ENCODE measurements at regions of chr16 and their contacts with region 1.

Region 1: DNA sequence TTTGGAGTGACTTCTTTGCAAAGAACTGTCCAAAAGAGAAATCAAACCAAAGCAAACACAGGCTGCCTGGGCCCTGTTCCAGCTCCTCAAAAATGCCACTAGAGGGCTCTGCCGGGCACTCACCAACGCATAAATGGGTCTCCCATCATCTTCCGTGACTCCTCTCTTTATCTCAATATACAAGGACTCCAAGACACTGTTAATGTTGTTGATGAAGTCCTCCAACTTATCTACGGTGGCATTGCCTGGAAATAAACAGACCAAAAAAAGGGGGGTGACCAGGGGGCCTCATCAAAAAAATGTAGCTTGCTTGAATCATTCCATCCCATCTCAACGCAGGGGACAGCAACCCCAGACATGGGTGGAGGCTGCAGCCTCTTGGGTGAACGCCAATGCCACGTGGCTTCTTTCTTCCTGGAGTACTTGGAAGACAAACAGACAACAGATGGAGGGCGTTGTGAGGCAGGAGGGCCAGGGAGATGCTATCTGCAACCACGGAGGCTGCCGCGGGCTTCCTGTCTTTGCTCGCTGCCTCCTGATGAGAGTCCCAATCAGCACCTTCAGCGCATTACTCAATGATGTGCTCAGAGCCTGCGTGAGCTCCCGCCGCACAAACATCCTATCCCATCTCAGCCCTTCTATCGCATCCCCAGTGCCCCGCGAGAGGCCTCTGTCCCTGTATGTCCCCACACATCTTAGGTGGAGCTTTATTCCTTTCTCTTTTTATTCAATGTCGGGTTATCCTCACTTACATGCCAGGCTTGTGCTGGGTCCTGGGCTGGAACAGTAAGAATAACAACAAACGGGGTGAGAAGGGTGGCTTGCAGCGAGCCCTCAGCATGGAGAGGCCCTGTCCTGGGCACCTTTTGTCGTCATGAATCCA is 32.0 kb downstream of the KDM8 start:
- DNase-seq: peak; percentile 97
- ATAC-seq: peak; percentile 63
- H3K4me3 Mint-ChIP-seq: peak overlapping the region; percentile 77
- H3K27ac Mint-ChIP-seq: peak overlapping the region; percentile 99
- H3K4me1 Mint-ChIP-seq: peaks cover 99% of the 10 kb centered on the region
- H3K27me3 Mint-ChIP-seq: no peaks in the 10 kb centered on the region

Region 2: GRCh38 chr16:26981266-26981938 is 253.9 kb before region 1 on chr16:
- CTCF ChIA-PET with region 1: no interaction called
- POLR2A ChIA-PET with region 1: no interaction called
- DNase-seq: no peak
- ATAC-seq: no peak
- H3K4me3 Mint-ChIP-seq: no peak overlapping the region
- H3K27ac Mint-ChIP-seq: no peak overlapping the region
- H3K4me1 Mint-ChIP-seq: no peaks in the 10 kb centered on the region
- H3K27me3 Mint-ChIP-seq: peaks cover 4% of the 10 kb centered on the region

Region 3: DNA sequence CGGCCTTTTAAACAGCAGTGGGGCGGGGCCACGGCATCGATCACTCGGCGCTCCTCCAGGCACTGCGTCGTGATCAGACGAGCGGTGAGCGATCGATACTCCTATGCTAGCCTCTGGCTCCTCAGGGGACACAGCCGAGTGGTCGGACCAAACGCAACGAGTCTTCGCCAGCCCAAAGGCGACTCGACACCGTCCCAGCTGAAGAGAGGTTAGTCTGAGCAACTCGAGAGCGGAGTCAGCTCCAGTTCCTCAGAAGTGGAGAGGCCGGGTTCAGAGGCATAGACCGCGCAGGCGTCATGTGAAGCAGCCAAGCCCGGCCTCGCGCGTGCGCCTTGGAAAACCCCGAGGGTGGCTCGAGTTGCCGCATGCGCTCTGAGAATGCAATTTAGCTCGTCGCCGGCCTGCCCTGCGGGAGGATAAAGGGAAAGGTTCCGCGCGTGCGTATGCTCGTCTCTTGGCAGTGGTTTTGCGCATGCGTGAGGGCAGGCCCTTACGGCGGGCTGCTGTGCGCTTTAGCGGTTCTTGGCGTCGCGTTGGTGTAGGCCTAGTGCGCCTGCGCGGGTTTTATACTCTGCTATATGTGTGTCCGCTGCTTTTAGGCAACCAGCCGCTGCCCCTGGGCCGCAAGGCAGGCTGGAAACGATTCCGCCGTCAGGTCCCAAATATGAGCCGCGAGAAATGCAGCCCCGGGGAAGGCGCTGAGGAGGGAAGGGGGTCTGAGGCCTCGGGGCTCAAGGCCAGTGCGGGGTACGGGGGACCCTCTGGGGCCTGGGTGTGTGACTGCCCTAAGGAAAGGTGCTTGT is 31.7 kb before region 1 on chr16 and contains the start of gene KDM8:
- CTCF ChIA-PET with region 1: interaction called, 43 read pairs
- POLR2A ChIA-PET with region 1: interaction called, 12 read pairs
- DNase-seq: peak; percentile 100
- ATAC-seq: peak; percentile 95
- H3K4me3 Mint-ChIP-seq: peak within 1 kb of the TSS; percentile 98
- H3K27ac Mint-ChIP-seq: peak within 1 kb of the TSS; percentile 99
- H3K4me1 Mint-ChIP-seq: peaks cover 59% of the 10 kb centered on the region
- H3K27me3 Mint-ChIP-seq: no peaks in the 10 kb centered on the region
- total RNA-seq, gene KDM8: 14.7 to 15.0 TPM

Region 4: DNA sequence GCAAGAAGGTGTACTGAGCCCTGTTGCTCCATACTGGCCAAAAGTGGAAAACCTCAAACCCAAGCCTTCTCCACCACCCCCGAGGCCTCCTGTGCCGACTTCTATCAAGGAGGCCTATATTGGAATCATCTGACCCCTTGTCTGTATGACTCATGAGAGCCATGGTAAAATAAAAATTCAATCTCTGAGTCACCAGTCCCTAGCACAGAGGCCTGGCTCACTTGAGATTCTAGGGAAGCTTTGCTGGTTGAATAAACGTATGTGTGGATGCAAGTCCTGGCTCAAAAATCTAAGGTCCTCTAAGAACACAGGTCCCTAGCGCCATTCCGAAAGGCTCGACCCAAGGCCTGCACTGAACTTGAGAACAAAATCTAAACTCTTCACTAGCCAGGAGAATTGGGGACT is 18.2 kb after region 1 on chr16:
- CTCF ChIA-PET with region 1: interaction called, 25 read pairs
- POLR2A ChIA-PET with region 1: interaction called, 33 read pairs
- DNase-seq: peak; percentile 24
- ATAC-seq: peak; percentile 61
- H3K4me3 Mint-ChIP-seq: no peak overlapping the region
- H3K27ac Mint-ChIP-seq: peak overlapping the region; percentile 85
- H3K4me1 Mint-ChIP-seq: peaks cover 64% of the 10 kb centered on the region
- H3K27me3 Mint-ChIP-seq: no peaks in the 10 kb centered on the region

Region 5: DNA sequence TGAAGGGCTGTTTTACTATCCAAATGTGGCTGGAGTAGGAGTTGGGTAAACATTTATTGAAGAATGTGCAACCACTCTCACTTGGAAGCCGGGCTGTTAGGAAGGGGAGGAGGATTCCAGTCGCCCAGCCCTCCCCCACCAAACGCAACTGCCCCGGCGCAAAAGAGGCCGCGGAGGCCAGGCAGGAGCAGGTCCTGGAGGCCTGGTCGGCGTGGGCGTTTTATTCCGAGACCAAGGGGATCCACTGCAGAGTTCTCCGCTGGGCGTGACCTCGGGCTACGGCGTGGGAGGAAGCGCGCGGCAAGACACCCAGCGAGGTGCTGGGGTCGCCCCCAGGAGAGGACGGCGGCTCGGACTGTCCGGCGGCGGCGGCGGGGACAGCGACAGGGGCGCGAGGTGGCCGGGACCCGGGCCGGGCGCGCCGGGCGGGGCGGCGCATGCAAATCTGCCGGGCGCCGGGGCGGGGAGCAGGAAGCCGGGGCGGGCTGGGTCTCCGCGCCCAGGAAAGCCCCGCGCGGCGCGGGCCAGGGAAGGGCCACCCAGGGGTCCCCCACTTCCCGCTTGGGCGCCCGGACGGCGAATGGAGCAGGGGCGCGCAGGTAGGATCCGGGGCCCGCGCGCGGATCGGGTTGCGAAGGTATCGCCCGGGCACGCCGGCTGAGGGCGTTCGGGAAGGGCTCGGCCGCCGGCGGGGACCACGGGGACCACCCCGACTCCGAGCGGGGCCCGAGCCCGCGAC is 78.3 kb after region 1 on chr16 and contains the start of gene IL4R:
- CTCF ChIA-PET with region 1: interaction called, 101 read pairs
- POLR2A ChIA-PET with region 1: interaction called, 222 read pairs
- DNase-seq: peak; percentile 66
- ATAC-seq: peak; percentile 49
- H3K4me3 Mint-ChIP-seq: peak within 1 kb of the TSS; percentile 90
- H3K27ac Mint-ChIP-seq: peak within 1 kb of the TSS; percentile 93
- H3K4me1 Mint-ChIP-seq: peaks cover 48% of the 10 kb centered on the region
- H3K27me3 Mint-ChIP-seq: peaks cover 2% of the 10 kb centered on the region
- total RNA-seq, gene IL4R: 231 to 237 TPM

Region 6: GRCh38 chr16:27367461-27368357 is 132.4 kb after region 1 on chr16:
- CTCF ChIA-PET with region 1: interaction called, 153 read pairs
- POLR2A ChIA-PET with region 1: interaction called, 69 read pairs
- DNase-seq: peak; percentile 93
- ATAC-seq: peak; percentile 82
- H3K4me3 Mint-ChIP-seq: peak overlapping the region; percentile 66
- H3K27ac Mint-ChIP-seq: peak overlapping the region; percentile 99
- H3K4me1 Mint-ChIP-seq: peaks cover 77% of the 10 kb centered on the region
- H3K27me3 Mint-ChIP-seq: no peaks in the 10 kb centered on the region

Region 7: GRCh38 chr16:27408012-27408601 is 172.8 kb after region 1 on chr16:
- CTCF ChIA-PET with region 1: interaction called, 23 read pairs
- POLR2A ChIA-PET with region 1: interaction called, 17 read pairs
- DNase-seq: peak; percentile 55
- ATAC-seq: peak; percentile 62
- H3K4me3 Mint-ChIP-seq: peak overlapping the region; percentile 40
- H3K27ac Mint-ChIP-seq: peak overlapping the region; percentile 84
- H3K4me1 Mint-ChIP-seq: peaks cover 82% of the 10 kb centered on the region
- H3K27me3 Mint-ChIP-seq: no peaks in the 10 kb centered on the region